ENCODE measurements at regions of chr4 and their contacts with region 1.

Region 1: GRCh38 chr4:152735396-152735859 is 44.1 kb downstream of the TIGD4 start:
- DNase-seq: peak; percentile 61
- ATAC-seq: peak; percentile 53
- H3K4me3 ChIP-seq: no peak overlapping the region
- H3K27ac ChIP-seq: no peak overlapping the region
- H3K4me1 ChIP-seq: no peaks in the 10 kb centered on the region
- H3K27me3 ChIP-seq: no peaks in the 10 kb centered on the region
- CTCF ChIP-seq: peak; percentile 70

Region 2: GRCh38 chr4:152415980-152416379 is 319.4 kb before region 1 on chr4:
- CTCF ChIA-PET with region 1: no interaction called
- POLR2A ChIA-PET with region 1: no interaction called
- intact Hi-C with region 1: loop called (anchors 10 kb)
- DNase-seq: peak; percentile 40
- ATAC-seq: peak; percentile 70
- H3K4me3 ChIP-seq: no peak overlapping the region
- H3K27ac ChIP-seq: no peak overlapping the region
- H3K4me1 ChIP-seq: peaks cover 10% of the 10 kb centered on the region
- H3K27me3 ChIP-seq: no peaks in the 10 kb centered on the region
- CTCF ChIP-seq: no peak

Region 3: GRCh38 chr4:152454398-152455011 is 280.9 kb before region 1 on chr4:
- CTCF ChIA-PET with region 1: interaction called, 3 read pairs
- POLR2A ChIA-PET with region 1: no interaction called
- intact Hi-C with region 1: loop called (anchors 1 kb)
- DNase-seq: peak; percentile 53
- ATAC-seq: no peak
- H3K4me3 ChIP-seq: no peak overlapping the region
- H3K27ac ChIP-seq: no peak overlapping the region
- H3K4me1 ChIP-seq: peaks cover 18% of the 10 kb centered on the region
- H3K27me3 ChIP-seq: no peaks in the 10 kb centered on the region
- CTCF ChIP-seq: peak; percentile 78

Region 4: GRCh38 chr4:152500800-152501434 is 234.5 kb before region 1 on chr4:
- CTCF ChIA-PET with region 1: no interaction called
- POLR2A ChIA-PET with region 1: no interaction called
- intact Hi-C with region 1: loop called (anchors 2 kb)
- DNase-seq: peak; percentile 90
- ATAC-seq: peak; percentile 73; the same call in 1 of the 2 replicates
- H3K4me3 ChIP-seq: no peak overlapping the region
- H3K27ac ChIP-seq: no peak overlapping the region
- H3K4me1 ChIP-seq: no peaks in the 10 kb centered on the region
- H3K27me3 ChIP-seq: no peaks in the 10 kb centered on the region
- CTCF ChIP-seq: peak; percentile 84

Region 5: GRCh38 chr4:152640058-152640833 is 95.2 kb before region 1 on chr4:
- CTCF ChIA-PET with region 1: interaction called, 7 read pairs
- POLR2A ChIA-PET with region 1: no interaction called
- intact Hi-C with region 1: loop called (anchors 1 kb)
- DNase-seq: peak; percentile 61
- ATAC-seq: peak; percentile 90
- H3K4me3 ChIP-seq: no peak overlapping the region
- H3K27ac ChIP-seq: no peak overlapping the region
- H3K4me1 ChIP-seq: no peaks in the 10 kb centered on the region
- H3K27me3 ChIP-seq: no peaks in the 10 kb centered on the region
- CTCF ChIP-seq: peak; percentile 71

Region 6: GRCh38 chr4:152679414-152680281 is 55.8 kb before region 1 on chr4 and contains the start of gene TMEM154:
- CTCF ChIA-PET with region 1: no interaction called
- POLR2A ChIA-PET with region 1: no interaction called
- intact Hi-C with region 1: loop called (anchors 5 kb)
- DNase-seq: peak; percentile 67
- ATAC-seq: peak; percentile 65
- H3K4me3 ChIP-seq: peak within 1 kb of the TSS; percentile 82
- H3K27ac ChIP-seq: peak within 1 kb of the TSS; percentile 90
- H3K4me1 ChIP-seq: peaks cover 36% of the 10 kb centered on the region
- H3K27me3 ChIP-seq: no peaks in the 10 kb centered on the region
- CTCF ChIP-seq: no peak
- total RNA-seq, gene TMEM154: 3.6 and 8.1 TPM in 2 replicates

Measured in PC-3 (cell line).